RWPE1 (cell line): ENCODE measurements at regions of chr16 and their contacts with region 1.

Region 1: DNA sequence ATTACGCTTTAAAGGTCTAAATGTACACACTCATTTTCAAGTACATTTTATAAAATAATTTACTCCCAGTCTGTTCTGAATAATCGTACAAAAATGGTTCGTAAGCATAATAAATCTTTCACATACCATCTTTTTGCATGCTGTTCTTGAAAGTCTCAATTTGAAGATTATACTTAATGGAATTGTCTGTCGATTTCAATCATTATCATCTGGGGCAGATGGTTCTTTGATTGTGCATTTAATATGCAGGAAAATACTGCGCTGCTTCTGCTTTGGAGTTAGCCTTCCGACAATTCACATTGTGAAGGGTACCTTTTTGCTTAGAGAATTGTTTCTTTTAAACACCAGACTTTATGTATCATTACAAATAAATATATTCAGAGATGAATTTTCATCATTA is 262.8 kb downstream of the ABCC12 start:
- DNase-seq: no peak
- H3K27ac ChIP-seq: no peak overlapping the region
- CTCF ChIP-seq: no peak

Region 2: DNA sequence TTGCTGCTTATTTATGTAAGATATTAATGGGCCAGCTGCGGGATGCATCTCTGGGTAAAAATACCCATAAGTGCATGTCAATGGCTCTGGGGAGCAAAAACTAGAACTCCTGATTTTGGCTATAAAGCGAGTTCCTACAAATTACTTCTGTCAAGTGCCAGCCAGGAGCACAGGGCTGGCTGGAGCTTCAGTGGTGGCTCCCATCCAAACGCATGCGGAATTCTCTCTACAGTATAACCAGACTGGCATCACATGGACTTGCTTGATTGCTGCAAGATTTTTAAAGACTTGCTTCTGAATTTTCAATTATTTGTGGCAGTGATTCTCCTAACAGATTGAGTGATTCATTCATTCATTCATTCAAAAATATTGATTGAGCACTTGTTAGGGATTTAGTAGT is 171.0 kb before region 1 on chr16:
- CTCF ChIA-PET with region 1: no interaction called
- POLR2A ChIA-PET with region 1: interaction called, 10 read pairs
- DNase-seq: no peak
- H3K27ac ChIP-seq: no peak overlapping the region
- CTCF ChIP-seq: no peak